Tibial artery (tissue), 4 donors: ENCODE measurements at regions of chr6 and their contacts with region 1.

Region 1: DNA sequence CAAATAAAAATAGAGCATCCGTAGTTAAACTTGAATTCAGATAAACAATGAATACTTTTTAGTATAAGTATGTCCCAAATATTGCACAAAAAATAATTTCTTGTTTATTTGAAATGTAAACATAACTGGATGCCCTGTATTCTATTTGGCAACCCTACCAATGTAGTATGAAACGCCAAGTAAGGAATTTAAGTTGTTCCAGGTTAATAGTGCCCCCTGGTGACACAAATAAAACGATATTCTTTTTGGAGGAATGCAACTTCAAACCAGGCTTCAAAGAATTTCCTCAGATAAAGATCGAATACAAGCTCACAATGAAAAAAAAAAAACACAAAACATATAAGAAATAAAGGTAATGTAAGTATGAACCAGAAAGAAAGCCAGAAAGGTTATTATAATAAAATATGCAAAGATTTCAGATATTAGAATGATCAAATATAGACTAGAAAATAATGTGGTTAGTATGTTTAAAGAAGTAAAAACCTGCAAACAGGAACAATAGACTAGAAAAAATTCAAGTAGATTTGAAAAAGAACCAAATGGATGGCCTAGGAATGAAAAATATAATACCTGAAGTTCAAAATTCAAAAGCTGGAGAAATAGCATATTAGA is 18.4 kb upstream of the AKAP7 start:
- DNase-seq: no peak
- H3K4me3 ChIP-seq: no peak overlapping the region
- H3K27ac ChIP-seq: no peak overlapping the region
- H3K4me1 ChIP-seq: no peaks in the 10 kb centered on the region
- H3K27me3 ChIP-seq: no peaks in the 10 kb centered on the region
- CTCF ChIP-seq: peak; percentile 46 to 78

Region 2: GRCh38 chr6:130885392-130886192 is 231.3 kb before region 1 on chr6:
- intact Hi-C with region 1: loop called (anchors 2 kb)
- DNase-seq: peak in 1 of 2 donors; percentile 68
- H3K4me3 ChIP-seq: no peak overlapping the region
- H3K27ac ChIP-seq: no peak overlapping the region
- H3K4me1 ChIP-seq: peaks cover 0 to 5% (median 0%) of the 10 kb centered on the region in 4 donors
- H3K27me3 ChIP-seq: no peaks in the 10 kb centered on the region
- CTCF ChIP-seq: peak; percentile 86 to 94